ENCODE measurements at regions of chr3 and their contacts with region 1.

Region 1: GRCh38 chr3:183766745-183767606 is 58.4 kb downstream of the MAP6D1 start:
- DNase-seq: peak; percentile 67
- ATAC-seq: peak; percentile 88 to 89

Region 2: GRCh38 chr3:183468424-183468823 is 298.6 kb before region 1 on chr3:
- intact Hi-C with region 1: loop called (anchors 5 to 10 kb)
- DNase-seq: no peak
- ATAC-seq: no peak

Region 3: GRCh38 chr3:183477801-183478456 is 289.0 kb before region 1 on chr3:
- intact Hi-C with region 1: loop called in 1 of 2 experiments (anchors 10 kb)
- DNase-seq: no peak
- ATAC-seq: no peak

Region 4: GRCh38 chr3:183502237-183503181 is 264.5 kb before region 1 on chr3:
- intact Hi-C with region 1: loop called (anchors 1 to 5 kb)
- DNase-seq: peak; percentile 38
- ATAC-seq: peak; percentile 61 to 84

Region 5: GRCh38 chr3:183988216-183988790 is 221.3 kb after region 1 on chr3:
- intact Hi-C with region 1: no loop called
- DNase-seq: no peak
- ATAC-seq: no peak

Measured in left cardiac atrium (tissue), 4 donors.